SK-N-SH (cell line): ENCODE measurements at regions of chr4 and their contacts with region 1.

Region 1: DNA sequence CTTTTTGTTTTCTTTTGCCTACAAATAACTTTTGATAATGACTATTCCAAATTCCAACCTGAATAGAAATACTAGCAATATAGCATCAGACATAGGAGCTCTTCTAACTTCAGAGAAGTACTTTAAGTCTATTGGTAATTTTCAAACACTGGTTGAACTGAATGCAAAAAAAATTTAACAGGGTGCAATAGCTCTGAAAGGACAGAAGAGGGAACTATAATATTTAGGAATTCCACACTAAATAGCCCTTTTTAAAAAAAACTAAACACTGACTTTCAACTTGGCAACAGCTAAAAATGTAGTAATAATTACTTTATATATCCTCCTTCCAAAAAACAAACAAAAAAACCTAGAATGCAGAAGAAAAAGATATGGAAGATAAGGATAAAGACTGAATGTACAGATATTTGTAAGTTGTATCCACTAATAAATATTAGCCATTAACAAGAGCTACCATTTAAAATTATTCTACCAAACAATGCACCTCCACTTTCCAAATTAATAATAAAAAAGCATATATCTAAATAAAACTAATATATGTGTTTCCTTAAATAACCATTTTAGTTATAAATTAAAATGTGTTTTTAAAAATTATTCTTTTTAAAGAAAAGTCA is 81.4 kb downstream of the FBXW7 start:
- DNase-seq: peak; percentile 51
- H3K4me3 ChIP-seq: no peak overlapping the region
- H3K27ac ChIP-seq: no peak overlapping the region
- H3K4me1 ChIP-seq: no peaks in the 10 kb centered on the region; a peak in 1 of 4 replicates
- H3K27me3 ChIP-seq: no peaks in the 10 kb centered on the region
- CTCF ChIP-seq: peak; percentile 84
- EP300 ChIP-seq: no peak
- RAD21 ChIP-seq: peak; percentile 84

Region 2: DNA sequence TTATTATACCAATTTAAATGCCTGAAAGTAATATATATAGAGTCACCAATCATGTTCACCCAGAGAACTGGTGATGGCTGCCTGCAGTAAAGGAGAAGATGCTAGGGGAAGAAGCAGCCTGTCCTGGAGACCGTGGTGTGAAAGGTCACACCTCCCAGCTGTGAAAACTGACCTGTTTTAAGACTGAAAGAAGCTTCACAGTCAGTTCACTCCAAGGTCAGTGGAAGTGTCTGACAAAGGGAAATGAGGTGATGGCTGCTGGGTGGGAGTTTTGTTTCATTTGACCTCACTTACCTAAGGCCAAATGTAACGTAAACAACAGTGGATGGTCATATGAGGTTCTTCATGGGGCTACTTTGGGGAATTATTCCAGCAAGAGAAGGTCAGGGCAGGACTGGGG is 341.6 kb before region 1 on chr4:
- CTCF ChIA-PET with region 1: no interaction called
- POLR2A ChIA-PET with region 1: no interaction called
- DNase-seq: no peak
- H3K4me3 ChIP-seq: no peak overlapping the region
- H3K27ac ChIP-seq: no peak overlapping the region
- H3K4me1 ChIP-seq: peaks cover 7 to 10% of the 10 kb centered on the region in 2 experiments; a peak in 2 of 4 replicates
- H3K27me3 ChIP-seq: no peaks in the 10 kb centered on the region; the same call in 1 of the 2 replicates
- CTCF ChIP-seq: no peak
- EP300 ChIP-seq: no peak
- RAD21 ChIP-seq: no peak

Region 3: GRCh38 chr4:152443859-152444258 is 10.6 kb before region 1 on chr4:
- CTCF ChIA-PET with region 1: interaction called, 13 read pairs
- POLR2A ChIA-PET with region 1: no interaction called
- DNase-seq: no peak
- H3K4me3 ChIP-seq: no peak overlapping the region
- H3K27ac ChIP-seq: no peak overlapping the region
- H3K4me1 ChIP-seq: no peaks in the 10 kb centered on the region; a peak in 1 of 4 replicates
- H3K27me3 ChIP-seq: no peaks in the 10 kb centered on the region
- CTCF ChIP-seq: no peak
- EP300 ChIP-seq: no peak
- RAD21 ChIP-seq: no peak

Region 4: GRCh38 chr4:152479428-152480026 is 25.0 kb after region 1 on chr4:
- CTCF ChIA-PET with region 1: interaction called, 10 read pairs
- POLR2A ChIA-PET with region 1: no interaction called
- DNase-seq: no peak
- H3K4me3 ChIP-seq: no peak overlapping the region
- H3K27ac ChIP-seq: peak overlapping the region; percentile 17 to 90; a peak in 3 of 4 replicates
- H3K4me1 ChIP-seq: peaks cover 0 to 15% of the 10 kb centered on the region in 2 experiments; a peak in 2 of 4 replicates
- H3K27me3 ChIP-seq: no peaks in the 10 kb centered on the region
- CTCF ChIP-seq: no peak
- EP300 ChIP-seq: no peak
- RAD21 ChIP-seq: no peak

Region 5: DNA sequence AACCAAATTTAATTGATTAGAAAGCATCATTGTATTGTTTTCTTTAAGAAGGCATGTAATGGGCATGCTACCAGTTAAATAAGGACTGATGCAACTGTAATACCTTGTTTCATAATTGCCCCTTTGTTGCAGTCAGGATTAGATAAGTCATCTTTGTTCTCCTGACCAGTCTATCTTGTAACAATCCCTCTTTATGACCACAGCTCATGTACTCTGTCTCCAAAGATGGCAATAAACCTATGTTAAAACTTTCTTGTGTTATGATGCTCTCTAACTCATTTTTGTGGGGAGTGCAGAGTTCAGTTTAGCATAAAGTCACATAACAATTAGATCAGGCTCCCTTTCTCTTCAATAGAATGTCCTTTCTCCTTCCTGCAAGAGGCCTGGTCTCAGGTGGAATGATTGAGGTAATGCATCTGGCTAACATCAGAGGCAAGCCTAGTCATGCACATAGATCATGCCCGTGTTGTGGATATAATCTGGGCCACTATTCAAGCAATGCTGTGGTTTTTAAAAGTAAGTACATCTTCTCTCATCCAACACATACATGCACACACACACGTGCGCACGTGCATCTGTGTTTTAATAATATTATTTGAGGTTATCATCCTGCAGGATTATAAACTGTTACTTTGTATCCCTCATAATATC is 179.7 kb after region 1 on chr4:
- CTCF ChIA-PET with region 1: interaction called, 52 read pairs
- POLR2A ChIA-PET with region 1: no interaction called
- DNase-seq: no peak
- H3K4me3 ChIP-seq: no peak overlapping the region
- H3K27ac ChIP-seq: no peak overlapping the region
- H3K4me1 ChIP-seq: peaks cover 0 to 4% of the 10 kb centered on the region in 2 experiments; a peak in 1 of 4 replicates
- H3K27me3 ChIP-seq: no peaks in the 10 kb centered on the region
- CTCF ChIP-seq: no peak
- EP300 ChIP-seq: no peak
- RAD21 ChIP-seq: no peak

Region 6: DNA sequence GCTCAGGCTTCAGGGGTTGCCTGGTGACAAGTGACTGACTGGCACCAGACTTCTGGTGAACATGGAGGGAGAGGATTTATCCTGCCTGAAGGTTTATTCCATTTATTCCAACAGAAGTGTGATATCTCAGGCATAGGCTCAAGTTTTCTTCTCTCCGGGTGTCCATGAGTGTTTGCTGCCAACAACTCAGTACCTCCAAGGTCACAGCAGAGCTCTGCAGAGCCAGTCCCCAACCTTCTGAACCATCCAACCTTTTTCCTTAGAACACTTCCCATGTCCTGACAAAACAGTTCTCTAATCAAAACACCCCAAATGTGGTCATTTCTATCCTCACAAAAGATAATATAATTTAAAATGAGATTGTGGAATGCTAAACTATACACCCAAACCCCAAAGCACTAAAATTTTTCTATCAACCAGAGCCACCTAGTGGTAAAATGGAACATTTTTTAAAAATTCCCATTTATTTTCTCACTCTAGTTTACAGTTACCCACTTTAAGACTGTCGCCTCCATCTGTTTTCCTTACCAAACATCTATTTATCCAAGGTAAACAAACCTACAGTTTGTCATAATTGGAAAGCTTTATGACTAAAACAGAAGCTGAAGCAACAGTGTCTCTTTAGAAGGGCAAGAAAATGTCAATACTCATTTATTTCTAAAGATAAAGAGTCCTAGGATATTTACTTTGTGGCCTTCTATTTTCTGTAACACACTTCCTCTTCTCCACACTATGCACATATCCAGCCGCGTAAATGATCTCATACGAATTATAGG is 185.7 kb after region 1 on chr4:
- CTCF ChIA-PET with region 1: interaction called, 52 read pairs
- POLR2A ChIA-PET with region 1: interaction called, 3 read pairs
- DNase-seq: peak; percentile 42
- H3K4me3 ChIP-seq: no peak overlapping the region
- H3K27ac ChIP-seq: no peak overlapping the region
- H3K4me1 ChIP-seq: peaks cover 0 to 13% of the 10 kb centered on the region in 2 experiments; a peak in 1 of 4 replicates
- H3K27me3 ChIP-seq: no peaks in the 10 kb centered on the region
- CTCF ChIP-seq: peak; percentile 79
- EP300 ChIP-seq: no peak
- RAD21 ChIP-seq: peak; percentile 78

Region 7: GRCh38 chr4:152735396-152735859 is 280.9 kb after region 1 on chr4:
- CTCF ChIA-PET with region 1: interaction called, 11 read pairs
- POLR2A ChIA-PET with region 1: no interaction called
- DNase-seq: peak; percentile 50
- H3K4me3 ChIP-seq: no peak overlapping the region; a peak in 1 of 4 replicates
- H3K27ac ChIP-seq: no peak overlapping the region
- H3K4me1 ChIP-seq: no peaks in the 10 kb centered on the region
- H3K27me3 ChIP-seq: no peaks in the 10 kb centered on the region
- CTCF ChIP-seq: peak; percentile 73
- EP300 ChIP-seq: no peak
- RAD21 ChIP-seq: peak; percentile 74